OCI-LY7 (cell line): ENCODE measurements at regions of chr21 and their contacts with region 1.

Region 1: GRCh38 chr21:32392880-32393676 is at the start of gene URB1:
- DNase-seq: peak; percentile 91
- H3K4me3 ChIP-seq: peak within 1 kb of the TSS; percentile 86
- H3K27ac ChIP-seq: peak within 1 kb of the TSS; percentile 35
- H3K4me1 ChIP-seq: peaks cover 34% of the 10 kb centered on the region
- CTCF ChIP-seq: no peak
- total RNA-seq, gene URB1: 19.4 and 20.8 TPM in 2 replicates

Region 2: GRCh38 chr21:32278518-32279376 is 114.3 kb before region 1 on chr21 and contains the start of gene MIS18A:
- CTCF ChIA-PET with region 1: no interaction called
- POLR2A ChIA-PET with region 1: interaction called, 4 read pairs
- intact Hi-C with region 1: loop called (anchors 2 kb)
- DNase-seq: peak; percentile 94
- H3K4me3 ChIP-seq: peak within 1 kb of the TSS; percentile 90
- H3K27ac ChIP-seq: peak within 1 kb of the TSS; percentile 80
- H3K4me1 ChIP-seq: peaks cover 23% of the 10 kb centered on the region
- CTCF ChIP-seq: 0 out of 2 replicates have a peak, but pooled peaks have one; percentile 17
- total RNA-seq, gene MIS18A: 25.2 and 31.7 TPM in 2 replicates